Body of pancreas (tissue), 4 donors: ENCODE measurements at regions of chr11 and their contacts with region 1.

Region 1: GRCh38 chr11:1574933-1575242 is 2.8 kb upstream of the DUSP8 start:
- DNase-seq: no peak
- ATAC-seq: no peak
- H3K4me3 ChIP-seq: no peak overlapping the region
- H3K27ac ChIP-seq: peak overlapping the region in 1 of 4 donors; percentile 96
- H3K4me1 ChIP-seq: peaks cover 31% of the 10 kb centered on the region
- H3K27me3 ChIP-seq: no peaks in the 10 kb centered on the region
- CTCF ChIP-seq: no peak
- POLR2A ChIP-seq: no peak

Region 2: GRCh38 chr11:1153951-1154493 is 420.9 kb before region 1 on chr11:
- intact Hi-C with region 1: no loop called
- DNase-seq: peak; percentile 24 to 48 (median 37)
- ATAC-seq: no peak
- H3K4me3 ChIP-seq: no peak overlapping the region
- H3K27ac ChIP-seq: no peak overlapping the region
- H3K4me1 ChIP-seq: no peaks in the 10 kb centered on the region
- H3K27me3 ChIP-seq: no peaks in the 10 kb centered on the region
- CTCF ChIP-seq: no peak
- POLR2A ChIP-seq: no peak

Region 3: GRCh38 chr11:1226986-1227545 is 347.8 kb before region 1 on chr11:
- intact Hi-C with region 1: no loop called
- DNase-seq: peak in 2 of 4 donors; percentile 5 to 11
- ATAC-seq: no peak
- H3K4me3 ChIP-seq: no peak overlapping the region
- H3K27ac ChIP-seq: no peak overlapping the region
- H3K4me1 ChIP-seq: peaks cover 8% of the 10 kb centered on the region
- H3K27me3 ChIP-seq: peaks cover 0 to 19% of the 10 kb centered on the region in 2 donors
- CTCF ChIP-seq: no peak
- POLR2A ChIP-seq: no peak

Region 4: GRCh38 chr11:1401656-1402221 is 173.1 kb before region 1 on chr11:
- intact Hi-C with region 1: no loop called
- DNase-seq: peak; percentile 73 to 83 (median 78)
- ATAC-seq: peak; percentile 76
- H3K4me3 ChIP-seq: no peak overlapping the region
- H3K27ac ChIP-seq: no peak overlapping the region
- H3K4me1 ChIP-seq: peaks cover 45% of the 10 kb centered on the region
- H3K27me3 ChIP-seq: no peaks in the 10 kb centered on the region
- CTCF ChIP-seq: no peak
- POLR2A ChIP-seq: no peak

Region 5: GRCh38 chr11:1541474-1542204 is 33.2 kb before region 1 on chr11:
- intact Hi-C with region 1: loop called (anchors 5 kb)
- DNase-seq: no peak
- ATAC-seq: no peak
- H3K4me3 ChIP-seq: no peak overlapping the region
- H3K27ac ChIP-seq: no peak overlapping the region
- H3K4me1 ChIP-seq: peaks cover 4% of the 10 kb centered on the region
- H3K27me3 ChIP-seq: no peaks in the 10 kb centered on the region
- CTCF ChIP-seq: no peak
- POLR2A ChIP-seq: no peak

Region 6: DNA sequence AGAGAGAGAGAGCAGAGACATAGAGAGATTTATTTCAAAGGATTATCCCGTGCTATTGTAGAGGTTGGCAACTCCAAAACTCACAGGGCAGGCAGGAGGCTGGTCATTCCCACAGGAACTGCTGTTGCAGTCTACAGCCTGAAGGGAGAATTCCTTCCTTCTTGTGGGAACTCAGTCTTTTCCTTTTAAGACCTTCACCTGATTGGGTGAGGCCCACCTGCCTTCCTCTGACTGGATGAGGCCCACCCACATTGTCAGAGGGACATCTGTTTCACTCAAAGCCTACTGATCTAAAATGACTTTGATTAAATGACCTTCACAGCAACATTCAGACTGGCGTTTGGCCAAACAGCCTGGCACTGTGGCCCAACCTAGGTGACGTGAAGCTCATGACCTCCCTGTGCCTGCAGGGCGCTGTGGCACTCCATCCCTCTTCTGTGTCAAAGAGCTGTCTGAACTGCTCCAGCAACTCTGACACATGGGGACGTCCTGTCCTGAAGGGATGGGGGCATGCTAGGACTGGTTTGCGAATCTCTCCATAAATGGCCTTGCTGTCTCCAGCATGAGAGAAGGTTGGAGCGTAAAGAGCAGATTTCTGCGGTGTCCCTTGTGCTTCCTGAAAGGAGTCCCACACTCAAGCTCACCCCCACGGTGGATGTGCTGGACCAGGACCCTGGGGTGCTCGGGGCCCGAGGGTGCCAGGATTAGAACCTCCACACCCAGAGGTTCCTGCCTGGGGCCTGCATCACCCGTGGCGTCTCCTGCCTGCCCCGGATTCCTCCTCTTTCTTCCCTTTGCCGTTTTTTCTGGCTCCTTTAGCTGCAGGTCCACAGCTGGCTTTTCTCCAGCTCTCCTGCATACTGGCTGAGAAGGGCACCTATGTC is 75.4 kb after region 1 on chr11:
- intact Hi-C with region 1: no loop called
- DNase-seq: no peak
- ATAC-seq: no peak
- H3K4me3 ChIP-seq: no peak overlapping the region
- H3K27ac ChIP-seq: no peak overlapping the region
- H3K4me1 ChIP-seq: peaks cover 5% of the 10 kb centered on the region
- H3K27me3 ChIP-seq: no peaks in the 10 kb centered on the region
- CTCF ChIP-seq: no peak
- POLR2A ChIP-seq: no peak